ENCODE measurements at regions of chr1 and their contacts with region 1.

Region 1: DNA sequence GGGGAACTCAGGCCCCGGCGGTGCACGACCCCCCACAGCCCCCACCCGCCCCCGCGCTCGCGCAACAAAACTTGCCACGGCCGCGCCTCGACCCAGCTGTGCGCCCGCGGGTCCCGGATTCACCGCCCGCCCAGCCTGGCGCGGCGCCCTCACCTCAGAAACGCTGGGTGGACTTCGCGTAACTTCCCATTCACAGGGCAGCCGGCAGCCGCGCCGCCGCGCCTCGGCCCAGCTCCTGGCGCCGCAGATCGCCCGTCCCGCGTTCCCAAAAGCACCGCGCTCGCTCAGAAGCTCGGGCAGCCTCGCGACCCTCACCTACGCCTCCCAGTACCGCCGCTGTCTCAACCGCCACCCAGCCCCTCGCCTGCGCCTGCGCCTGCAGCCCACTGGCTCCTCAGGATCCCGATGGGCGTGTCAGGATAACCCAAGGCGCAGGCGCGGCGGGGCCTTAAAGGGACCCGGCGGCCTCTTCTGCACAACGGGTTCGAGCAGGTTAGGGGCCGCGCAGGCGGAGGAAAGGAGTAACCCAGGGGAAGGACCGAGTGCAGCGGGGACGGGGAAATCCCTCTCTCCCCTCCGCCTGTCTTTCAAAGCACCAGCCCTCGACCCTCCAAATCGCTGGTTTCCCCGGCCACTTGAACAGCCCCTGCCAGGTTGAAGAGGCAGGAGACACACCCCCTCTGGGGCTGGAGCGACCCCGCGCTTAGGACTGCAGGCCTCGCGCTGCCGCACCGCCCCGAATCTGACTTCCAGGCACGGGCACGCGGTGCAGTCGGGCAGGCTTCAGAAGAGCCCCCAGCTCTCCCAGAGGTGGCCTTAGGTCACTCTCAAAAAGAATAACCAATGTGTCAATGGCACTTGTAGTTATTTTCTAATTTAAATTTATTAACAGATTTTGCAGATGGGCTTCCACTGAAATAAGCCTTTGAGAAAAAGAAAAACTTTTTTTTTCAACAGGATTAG is at the start of gene NBPF1:
- DNase-seq: peak; percentile 76 to 97 (median 87)
- ATAC-seq: peak; percentile 94
- H3K4me3 ChIP-seq: peak within 1 kb of the TSS; percentile 63
- H3K4me3 Mint-ChIP-seq: no peak within 1 kb of the TSS
- H3K27ac ChIP-seq: peak within 1 kb of the TSS in 1 of 2 donors; percentile 11
- H3K27ac Mint-ChIP-seq: no peak within 1 kb of the TSS
- H3K4me1 ChIP-seq: peaks cover 22% of the 10 kb centered on the region
- H3K4me1 Mint-ChIP-seq: no peaks in the 10 kb centered on the region
- H3K27me3 ChIP-seq: peaks cover 2 to 9% of the 10 kb centered on the region in 2 experiments
- H3K27me3 Mint-ChIP-seq: no peaks in the 10 kb centered on the region
- CTCF ChIP-seq: no peak
- total RNA-seq, gene NBPF1: 15.0 to 15.9 TPM

Region 2: GRCh38 chr1:16206547-16207317 is 406.7 kb before region 1 on chr1:
- CTCF ChIA-PET with region 1: no interaction called
- POLR2A ChIA-PET with region 1: no interaction called
- intact Hi-C with region 1: loop called in 1 of 2 experiments (anchors 5 kb)
- DNase-seq: peak; percentile 85 to 98 (median 91)
- ATAC-seq: peak; percentile 88
- H3K4me3 ChIP-seq: peak overlapping the region; percentile 75
- H3K4me3 Mint-ChIP-seq: peak overlapping the region; percentile 93
- H3K27ac ChIP-seq: peak overlapping the region; percentile 60 to 86
- H3K27ac Mint-ChIP-seq: peak overlapping the region; percentile 95
- H3K4me1 ChIP-seq: peaks cover 25% of the 10 kb centered on the region
- H3K4me1 Mint-ChIP-seq: peaks cover 12% of the 10 kb centered on the region
- H3K27me3 ChIP-seq: no peaks in the 10 kb centered on the region
- H3K27me3 Mint-ChIP-seq: no peaks in the 10 kb centered on the region
- CTCF ChIP-seq: no peak

Region 3: DNA sequence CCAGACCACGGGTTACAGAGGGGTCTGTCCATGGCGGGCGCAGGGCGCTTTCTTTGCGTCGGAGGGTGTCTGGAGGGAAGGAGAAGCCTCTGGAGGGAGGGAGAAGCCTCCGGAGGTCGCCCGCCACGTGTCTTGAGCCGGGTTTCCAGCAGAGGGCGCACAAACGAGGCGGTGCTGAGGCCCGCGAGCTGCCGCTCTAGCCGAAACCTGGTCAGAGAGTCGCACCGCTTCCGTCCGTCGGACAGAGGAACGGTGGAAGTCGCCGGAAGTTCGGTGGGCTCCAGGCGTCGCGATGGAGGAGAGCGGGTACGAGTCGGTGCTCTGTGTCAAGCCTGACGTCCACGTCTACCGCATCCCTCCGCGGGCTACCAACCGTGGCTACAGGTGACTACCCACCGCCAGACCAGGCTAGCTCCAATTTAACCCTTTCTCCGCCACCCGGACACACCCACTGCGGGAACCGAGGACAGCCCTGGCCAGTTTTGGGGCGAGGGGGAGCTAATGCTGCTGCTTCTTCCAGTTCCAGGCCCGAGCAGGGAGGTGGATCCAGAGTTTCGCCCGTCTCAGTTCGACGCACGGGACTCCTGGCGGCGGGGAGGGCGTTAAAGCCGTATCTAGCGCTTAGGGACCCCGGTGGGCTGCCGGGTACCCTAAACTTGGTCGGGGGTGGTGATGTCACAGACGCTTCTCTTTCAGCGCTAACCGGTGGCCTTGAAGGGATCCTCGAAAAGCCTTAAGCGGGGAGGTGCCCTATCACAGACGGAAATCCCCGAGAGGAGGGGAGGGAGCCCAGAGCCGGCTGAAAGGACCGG is 172.8 kb before region 1 on chr1 and contains the start of gene NECAP2:
- CTCF ChIA-PET with region 1: no interaction called
- POLR2A ChIA-PET with region 1: no interaction called
- intact Hi-C with region 1: loop called in 1 of 2 experiments (anchors 2 kb)
- DNase-seq: peak; percentile 86 to 96 (median 93)
- ATAC-seq: peak; percentile 80
- H3K4me3 ChIP-seq: peak within 1 kb of the TSS; percentile 82
- H3K4me3 Mint-ChIP-seq: peak within 1 kb of the TSS; percentile 99
- H3K27ac ChIP-seq: peak within 1 kb of the TSS; percentile 98 to 100
- H3K27ac Mint-ChIP-seq: peak within 1 kb of the TSS; percentile 97
- H3K4me1 ChIP-seq: peaks cover 45% of the 10 kb centered on the region
- H3K4me1 Mint-ChIP-seq: peaks cover 33% of the 10 kb centered on the region
- H3K27me3 ChIP-seq: no peaks in the 10 kb centered on the region
- H3K27me3 Mint-ChIP-seq: no peaks in the 10 kb centered on the region
- CTCF ChIP-seq: peak; percentile 84
- total RNA-seq, gene NECAP2: 65.8 to 66.0 TPM

Region 4: GRCh38 chr1:16498573-16499413 is 114.7 kb before region 1 on chr1:
- CTCF ChIA-PET with region 1: no interaction called
- POLR2A ChIA-PET with region 1: no interaction called
- intact Hi-C with region 1: loop called in 1 of 2 experiments (anchors 10 kb)
- DNase-seq: peak; percentile 70 to 93 (median 82)
- ATAC-seq: peak; percentile 90
- H3K4me3 ChIP-seq: peak overlapping the region; percentile 92
- H3K4me3 Mint-ChIP-seq: peak overlapping the region; percentile 80
- H3K27ac ChIP-seq: peak overlapping the region in 1 of 2 donors; percentile 21
- H3K27ac Mint-ChIP-seq: peak overlapping the region; percentile 75
- H3K4me1 ChIP-seq: peaks cover 20% of the 10 kb centered on the region
- H3K4me1 Mint-ChIP-seq: peaks cover 25% of the 10 kb centered on the region
- H3K27me3 ChIP-seq: no peaks in the 10 kb centered on the region
- H3K27me3 Mint-ChIP-seq: no peaks in the 10 kb centered on the region
- CTCF ChIP-seq: no peak

Region 5: DNA sequence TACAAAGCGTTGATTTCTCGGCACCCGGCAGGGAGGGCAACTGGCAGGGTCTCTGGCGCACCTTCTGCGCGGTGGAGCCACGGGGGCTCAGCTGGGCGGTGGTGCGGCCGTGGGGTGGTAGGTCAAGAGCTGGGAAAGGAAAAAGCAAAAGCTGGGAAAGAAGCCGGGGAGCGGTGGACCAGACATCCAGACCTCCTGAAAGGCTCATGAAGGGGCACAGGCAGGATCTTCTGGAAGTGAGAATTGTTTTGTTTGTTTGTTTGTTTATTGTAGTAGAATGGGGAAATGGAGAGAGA is 92.2 kb before region 1 on chr1:
- CTCF ChIA-PET with region 1: no interaction called
- POLR2A ChIA-PET with region 1: no interaction called
- intact Hi-C with region 1: no loop called
- DNase-seq: no peak
- ATAC-seq: no peak
- H3K4me3 ChIP-seq: no peak overlapping the region
- H3K4me3 Mint-ChIP-seq: no peak overlapping the region
- H3K27ac ChIP-seq: no peak overlapping the region
- H3K27ac Mint-ChIP-seq: no peak overlapping the region
- H3K4me1 ChIP-seq: no peaks in the 10 kb centered on the region
- H3K4me1 Mint-ChIP-seq: no peaks in the 10 kb centered on the region
- H3K27me3 ChIP-seq: peaks cover 8 to 16% of the 10 kb centered on the region in 2 experiments
- H3K27me3 Mint-ChIP-seq: peaks cover 40% of the 10 kb centered on the region
- CTCF ChIP-seq: no peak

Region 6: GRCh38 chr1:16631248-16632043 is 18.0 kb after region 1 on chr1:
- CTCF ChIA-PET with region 1: no interaction called
- POLR2A ChIA-PET with region 1: interaction called, 3 read pairs
- intact Hi-C with region 1: loop called in 1 of 2 experiments (anchors 2 kb)
- DNase-seq: peak in 4 of 14 experiments; percentile 2 to 47 (median 22)
- ATAC-seq: no peak
- H3K4me3 ChIP-seq: no peak overlapping the region
- H3K4me3 Mint-ChIP-seq: no peak overlapping the region
- H3K27ac ChIP-seq: no peak overlapping the region
- H3K27ac Mint-ChIP-seq: no peak overlapping the region
- H3K4me1 ChIP-seq: no peaks in the 10 kb centered on the region
- H3K4me1 Mint-ChIP-seq: peaks cover 7% of the 10 kb centered on the region
- H3K27me3 ChIP-seq: no peaks in the 10 kb centered on the region
- H3K27me3 Mint-ChIP-seq: no peaks in the 10 kb centered on the region
- CTCF ChIP-seq: no peak

Region 7: GRCh38 chr1:16921391-16922185 is 308.1 kb after region 1 on chr1 and contains the start of gene CROCC:
- CTCF ChIA-PET with region 1: interaction called, 3 read pairs
- POLR2A ChIA-PET with region 1: no interaction called
- intact Hi-C with region 1: loop called in 1 of 2 experiments (anchors 10 kb)
- DNase-seq: peak in 11 of 14 experiments; percentile 22 to 68 (median 41)
- ATAC-seq: peak; percentile 85
- H3K4me3 ChIP-seq: peak within 1 kb of the TSS; percentile 20
- H3K4me3 Mint-ChIP-seq: peak within 1 kb of the TSS; percentile 55
- H3K27ac ChIP-seq: no peak within 1 kb of the TSS
- H3K27ac Mint-ChIP-seq: no peak within 1 kb of the TSS
- H3K4me1 ChIP-seq: peaks cover 30% of the 10 kb centered on the region
- H3K4me1 Mint-ChIP-seq: peaks cover 30% of the 10 kb centered on the region
- H3K27me3 ChIP-seq: no peaks in the 10 kb centered on the region
- H3K27me3 Mint-ChIP-seq: no peaks in the 10 kb centered on the region
- CTCF ChIP-seq: no peak
- total RNA-seq, gene CROCC: 47.4 to 49.7 TPM